ENCODE measurements at regions of chr2 and their contacts with region 1.

Region 1: GRCh38 chr2:136052369-136053362 is 65.3 kb downstream of the CXCR4 start:
- DNase-seq: no peak
- ATAC-seq: peak; percentile 15
- H3K4me3 ChIP-seq: peak overlapping the region; percentile 12
- H3K4me3 Mint-ChIP-seq: peak overlapping the region; percentile 37 to 85 (median 70)
- H3K27ac ChIP-seq: peak overlapping the region; percentile 50
- H3K27ac Mint-ChIP-seq: peak overlapping the region; percentile 62 to 96 (median 87)
- H3K4me1 ChIP-seq: peaks cover 86 to 92% of the 10 kb centered on the region in 2 donors
- H3K4me1 Mint-ChIP-seq: peaks cover 60 to 93% (median 90%) of the 10 kb centered on the region in 7 donors
- H3K27me3 ChIP-seq: no peaks in the 10 kb centered on the region
- H3K27me3 Mint-ChIP-seq: no peaks in the 10 kb centered on the region

Region 2: GRCh38 chr2:135797497-135798274 is 255.0 kb before region 1 on chr2:
- CTCF ChIA-PET with region 1: no interaction called
- POLR2A ChIA-PET with region 1: no interaction called
- intact Hi-C with region 1: no loop called
- DNase-seq: peak; percentile 46 to 78 (median 69)
- ATAC-seq: peak; percentile 92
- H3K4me3 ChIP-seq: no peak overlapping the region
- H3K4me3 Mint-ChIP-seq: peak overlapping the region in 1 of 10 donors; percentile 58
- H3K27ac ChIP-seq: no peak overlapping the region
- H3K27ac Mint-ChIP-seq: peak overlapping the region in 1 of 9 donors; percentile 65
- H3K4me1 ChIP-seq: peaks cover 0 to 6% of the 10 kb centered on the region in 2 donors
- H3K4me1 Mint-ChIP-seq: peaks cover 0 to 20% (median 14%) of the 10 kb centered on the region in 7 donors
- H3K27me3 ChIP-seq: no peaks in the 10 kb centered on the region
- H3K27me3 Mint-ChIP-seq: no peaks in the 10 kb centered on the region

Region 3: GRCh38 chr2:135960656-135961551 is 91.8 kb before region 1 on chr2:
- CTCF ChIA-PET with region 1: no interaction called
- POLR2A ChIA-PET with region 1: no interaction called
- intact Hi-C with region 1: loop called in 1 of 2 experiments (anchors 2 kb)
- DNase-seq: peak in 6 of 9 donors; percentile 3 to 44 (median 26)
- ATAC-seq: peak; percentile 76
- H3K4me3 ChIP-seq: no peak overlapping the region
- H3K4me3 Mint-ChIP-seq: peak overlapping the region in 9 of 10 donors; percentile 3 to 79 (median 37)
- H3K27ac ChIP-seq: peak overlapping the region; percentile 40
- H3K27ac Mint-ChIP-seq: peak overlapping the region; percentile 51 to 93 (median 83)
- H3K4me1 ChIP-seq: peaks cover 18 to 26% of the 10 kb centered on the region in 2 donors
- H3K4me1 Mint-ChIP-seq: peaks cover 37 to 67% (median 60%) of the 10 kb centered on the region in 7 donors
- H3K27me3 ChIP-seq: no peaks in the 10 kb centered on the region
- H3K27me3 Mint-ChIP-seq: no peaks in the 10 kb centered on the region

Region 4: DNA sequence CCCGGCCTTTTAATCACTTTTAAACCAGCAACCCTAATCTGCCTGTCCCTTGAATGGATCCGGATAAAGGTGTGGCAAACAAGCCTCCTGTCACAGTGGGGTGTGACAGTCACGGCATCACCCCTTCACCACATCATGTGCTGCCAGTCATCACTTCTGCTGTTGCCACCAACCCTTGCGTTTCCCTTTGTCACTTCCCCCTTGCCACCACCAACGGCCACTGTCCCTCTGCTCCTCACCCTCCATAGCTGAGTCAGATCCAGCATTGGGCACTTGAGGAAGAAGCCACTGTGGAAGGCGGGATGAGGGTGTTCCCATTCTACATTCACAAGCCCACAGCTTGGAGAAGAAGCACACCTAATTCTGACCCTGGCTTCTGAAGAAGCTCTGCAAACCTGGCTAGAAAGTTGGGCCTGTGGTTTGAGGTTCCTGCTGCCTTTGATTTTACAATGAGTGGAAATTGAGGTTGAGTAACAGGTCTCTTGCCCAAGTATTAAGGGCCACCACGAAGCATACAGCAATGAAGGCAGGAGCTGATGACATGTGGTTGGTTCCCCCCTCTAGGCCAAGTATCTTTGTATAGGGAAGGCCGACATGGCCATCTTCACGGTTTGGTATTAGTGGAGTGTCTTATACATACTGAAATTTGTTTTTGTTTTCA is 44.3 kb before region 1 on chr2:
- CTCF ChIA-PET with region 1: interaction called, 8 read pairs
- POLR2A ChIA-PET with region 1: interaction called, 8 read pairs
- intact Hi-C with region 1: loop called (anchors 2 to 5 kb)
- DNase-seq: peak; percentile 20 to 53 (median 33)
- ATAC-seq: peak; percentile 94
- H3K4me3 ChIP-seq: no peak overlapping the region
- H3K4me3 Mint-ChIP-seq: peak overlapping the region; percentile 7 to 77 (median 34)
- H3K27ac ChIP-seq: no peak overlapping the region
- H3K27ac Mint-ChIP-seq: peak overlapping the region; percentile 60 to 94 (median 75)
- H3K4me1 ChIP-seq: peaks cover 11 to 20% of the 10 kb centered on the region in 2 donors
- H3K4me1 Mint-ChIP-seq: peaks cover 17 to 48% (median 30%) of the 10 kb centered on the region in 7 donors
- H3K27me3 ChIP-seq: no peaks in the 10 kb centered on the region
- H3K27me3 Mint-ChIP-seq: no peaks in the 10 kb centered on the region

Measured in naive thymus-derived CD4-positive, alpha-beta T cell (primary cell).